Panc1 (cell line): ENCODE measurements at regions of chr7 and their contacts with region 1.

Region 1: DNA sequence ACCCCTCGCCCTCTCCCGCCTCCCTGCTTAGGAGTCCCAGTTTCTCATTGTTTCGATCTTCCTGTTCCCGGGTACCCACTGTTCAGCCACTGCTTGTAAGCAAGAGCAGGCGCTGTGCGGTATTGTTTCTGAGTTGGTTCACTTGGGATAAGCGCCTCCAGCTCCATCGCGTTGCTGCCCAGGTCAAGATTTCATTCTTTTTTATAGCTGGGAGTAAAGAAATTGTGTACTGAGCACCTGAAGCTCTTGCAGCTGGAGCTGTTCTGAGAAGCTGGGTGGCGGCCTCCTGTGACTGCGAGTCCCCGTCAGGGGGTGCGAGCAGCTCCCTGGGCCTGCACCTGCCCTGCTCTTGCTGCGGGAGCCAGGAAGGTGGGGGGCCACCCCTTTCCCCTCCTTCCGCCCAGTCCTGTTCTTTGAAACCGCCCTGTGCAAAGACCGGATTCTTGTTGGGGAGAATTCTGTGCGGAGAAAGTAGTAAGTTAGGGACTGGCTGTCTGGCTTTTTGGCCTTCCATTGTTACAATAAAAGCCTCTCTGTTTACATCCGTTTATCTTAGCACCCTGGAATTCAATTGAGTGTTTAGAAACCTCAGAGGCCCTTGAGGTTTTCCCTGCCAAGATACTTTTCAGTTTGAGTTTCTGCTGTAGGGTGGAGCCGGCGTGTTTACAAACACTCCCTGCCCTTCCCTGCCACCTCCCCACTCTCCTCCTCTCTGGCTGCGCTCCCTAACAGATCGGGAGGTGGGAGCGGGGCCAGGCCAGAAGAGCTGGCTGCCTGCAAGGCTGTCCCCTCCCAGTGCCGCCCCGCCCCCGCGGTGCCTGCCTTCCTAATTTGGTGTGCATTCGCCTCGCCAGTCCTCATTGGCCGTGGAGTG is 30.8 kb upstream of the AP5Z1 start:
- DNase-seq: peak; percentile 90
- ATAC-seq: peak; percentile 95
- H3K4me3 ChIP-seq: peak overlapping the region; percentile 17 to 49
- H3K27ac ChIP-seq: peak overlapping the region; percentile 88
- H3K4me1 ChIP-seq: peaks cover 31% of the 10 kb centered on the region
- H3K27me3 ChIP-seq: no peaks in the 10 kb centered on the region
- CTCF ChIP-seq: no peak

Region 2: DNA sequence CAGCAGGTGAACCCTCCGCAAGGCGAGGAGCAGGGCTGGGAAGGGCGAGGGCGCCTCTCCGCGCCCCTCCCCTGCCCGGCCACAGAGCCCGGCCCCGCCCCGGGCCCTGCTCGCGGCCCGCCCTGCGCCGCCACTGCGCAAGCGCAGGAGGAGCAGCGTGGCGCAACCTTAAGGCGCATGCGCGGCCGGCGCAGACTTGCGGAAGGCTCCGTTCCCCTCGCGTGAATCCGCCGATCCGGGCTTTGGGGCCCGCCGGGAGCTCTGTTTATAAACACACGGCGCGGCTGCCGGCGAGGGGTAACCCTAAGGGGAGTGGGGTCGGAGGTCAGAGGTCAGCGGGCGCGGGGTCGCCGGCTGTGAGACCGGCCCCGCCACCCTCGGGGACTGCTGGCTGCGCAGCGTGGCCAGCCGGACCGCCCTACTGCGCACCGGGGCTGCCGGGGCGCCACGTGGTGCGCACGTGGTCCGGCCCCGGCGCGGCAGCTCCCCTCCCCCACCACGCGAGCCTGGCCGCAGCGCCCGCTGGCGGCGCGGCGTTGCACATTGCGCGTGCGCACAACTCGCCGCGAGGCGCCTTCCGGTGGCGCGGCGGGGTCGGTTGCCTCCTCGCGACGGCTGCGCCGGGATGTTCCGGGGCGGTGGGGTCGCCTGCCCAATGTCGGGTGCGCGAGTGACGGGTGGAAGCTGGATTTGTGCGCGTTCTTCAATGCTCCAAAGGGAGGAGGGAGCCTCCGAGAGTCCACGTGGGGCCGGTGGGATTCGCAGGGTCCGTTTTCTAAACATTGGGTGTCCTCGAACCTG is 102.8 kb before region 1 on chr7:
- CTCF ChIA-PET with region 1: no interaction called
- POLR2A ChIA-PET with region 1: interaction called, 10 read pairs
- in situ Hi-C with region 1: no loop called
- intact Hi-C with region 1: no loop called
- DNase-seq: peak; percentile 80
- ATAC-seq: peak; percentile 96
- H3K4me3 ChIP-seq: peak overlapping the region; percentile 63 to 90
- H3K27ac ChIP-seq: peak overlapping the region; percentile 88
- H3K4me1 ChIP-seq: peaks cover 15% of the 10 kb centered on the region
- H3K27me3 ChIP-seq: no peaks in the 10 kb centered on the region
- CTCF ChIP-seq: peak; percentile 90; the same call in 1 of the 2 replicates